ENCODE measurements at regions of chrX and their contacts with region 1.

Region 1: DNA sequence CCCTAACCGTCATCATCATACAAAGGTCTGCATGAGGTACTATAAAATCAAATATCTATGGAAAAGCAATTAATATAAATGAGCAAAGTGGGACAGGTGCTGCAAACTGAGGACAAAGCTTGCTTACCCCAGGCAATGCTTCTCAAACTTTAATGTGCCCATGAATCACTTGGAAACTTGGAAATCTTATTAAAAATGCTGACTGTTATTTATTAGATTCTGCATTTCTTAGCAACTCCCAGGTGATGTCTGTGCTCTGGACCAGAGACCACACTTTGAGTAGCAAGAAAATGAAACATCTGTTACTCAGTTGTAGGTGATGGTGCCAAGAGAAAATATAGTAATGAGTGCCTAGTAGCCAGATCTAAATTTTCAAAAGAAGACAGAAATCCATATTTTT is 890.4 kb upstream of the FTHL17 start:
- DNase-seq: no peak
- H3K4me3 ChIP-seq: no peak overlapping the region
- H3K4me3 Mint-ChIP-seq: no peak overlapping the region
- H3K27ac Mint-ChIP-seq: no peak overlapping the region
- H3K4me1 ChIP-seq: no peaks in the 10 kb centered on the region
- H3K4me1 Mint-ChIP-seq: no peaks in the 10 kb centered on the region
- H3K27me3 ChIP-seq: no peaks in the 10 kb centered on the region
- H3K27me3 Mint-ChIP-seq: no peaks in the 10 kb centered on the region
- CTCF ChIP-seq: no peak

Region 2: DNA sequence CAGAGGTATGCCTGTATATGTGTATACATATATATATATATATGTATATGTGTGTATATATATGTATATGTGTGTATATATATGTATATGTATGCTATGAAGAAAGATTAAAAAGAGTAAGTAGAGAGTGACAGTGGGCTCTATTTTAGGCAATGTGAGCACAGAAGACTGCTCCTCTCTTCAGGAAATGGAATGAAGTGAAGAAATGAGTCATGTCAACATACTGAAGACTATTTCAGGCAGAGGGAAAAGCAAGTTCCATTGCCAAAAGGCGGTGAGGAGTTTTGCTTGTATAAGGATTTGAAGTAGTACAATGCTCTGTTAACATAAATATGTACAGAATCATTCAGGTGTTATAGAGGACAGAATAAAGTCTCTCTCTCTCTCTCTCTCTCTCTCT is 117.3 kb before region 1 on chrX:
- CTCF ChIA-PET with region 1: no interaction called
- POLR2A ChIA-PET with region 1: no interaction called
- intact Hi-C with region 1: no loop called
- DNase-seq: no peak
- H3K4me3 ChIP-seq: no peak overlapping the region
- H3K4me3 Mint-ChIP-seq: no peak overlapping the region
- H3K27ac Mint-ChIP-seq: no peak overlapping the region
- H3K4me1 ChIP-seq: 0 out of 2 replicates have a peak, but pooled peaks cover 2% of the 10 kb centered on the region
- H3K4me1 Mint-ChIP-seq: peaks cover 10% of the 10 kb centered on the region
- H3K27me3 ChIP-seq: no peaks in the 10 kb centered on the region
- H3K27me3 Mint-ChIP-seq: no peaks in the 10 kb centered on the region
- CTCF ChIP-seq: no peak

Region 3: GRCh38 chrX:31988975-31989374 is 26.7 kb after region 1 on chrX:
- CTCF ChIA-PET with region 1: no interaction called
- POLR2A ChIA-PET with region 1: no interaction called
- intact Hi-C with region 1: loop called (anchors 1 kb)
- DNase-seq: no peak
- H3K4me3 ChIP-seq: no peak overlapping the region
- H3K4me3 Mint-ChIP-seq: no peak overlapping the region
- H3K27ac Mint-ChIP-seq: no peak overlapping the region
- H3K4me1 ChIP-seq: no peaks in the 10 kb centered on the region; the same call in 1 of the 2 replicates
- H3K4me1 Mint-ChIP-seq: peaks cover 14% of the 10 kb centered on the region
- H3K27me3 ChIP-seq: no peaks in the 10 kb centered on the region
- H3K27me3 Mint-ChIP-seq: no peaks in the 10 kb centered on the region
- CTCF ChIP-seq: no peak